CD14-positive monocyte (primary cell): ENCODE measurements at regions of chr22 and their contacts with region 1.

Region 1: GRCh38 chr22:28009272-28009827 is 90.3 kb upstream of the PITPNB start:
- DNase-seq: peak; percentile 30 to 61 (median 60)
- H3K4me3 ChIP-seq: no peak overlapping the region
- H3K4me3 Mint-ChIP-seq: no peak overlapping the region
- H3K27ac ChIP-seq: no peak overlapping the region
- H3K27ac Mint-ChIP-seq: no peak overlapping the region
- H3K4me1 ChIP-seq: no peaks in the 10 kb centered on the region
- H3K4me1 Mint-ChIP-seq: no peaks in the 10 kb centered on the region
- H3K27me3 ChIP-seq: no peaks in the 10 kb centered on the region
- H3K27me3 Mint-ChIP-seq: no peaks in the 10 kb centered on the region
- CTCF ChIP-seq: peak; percentile 96

Region 2: DNA sequence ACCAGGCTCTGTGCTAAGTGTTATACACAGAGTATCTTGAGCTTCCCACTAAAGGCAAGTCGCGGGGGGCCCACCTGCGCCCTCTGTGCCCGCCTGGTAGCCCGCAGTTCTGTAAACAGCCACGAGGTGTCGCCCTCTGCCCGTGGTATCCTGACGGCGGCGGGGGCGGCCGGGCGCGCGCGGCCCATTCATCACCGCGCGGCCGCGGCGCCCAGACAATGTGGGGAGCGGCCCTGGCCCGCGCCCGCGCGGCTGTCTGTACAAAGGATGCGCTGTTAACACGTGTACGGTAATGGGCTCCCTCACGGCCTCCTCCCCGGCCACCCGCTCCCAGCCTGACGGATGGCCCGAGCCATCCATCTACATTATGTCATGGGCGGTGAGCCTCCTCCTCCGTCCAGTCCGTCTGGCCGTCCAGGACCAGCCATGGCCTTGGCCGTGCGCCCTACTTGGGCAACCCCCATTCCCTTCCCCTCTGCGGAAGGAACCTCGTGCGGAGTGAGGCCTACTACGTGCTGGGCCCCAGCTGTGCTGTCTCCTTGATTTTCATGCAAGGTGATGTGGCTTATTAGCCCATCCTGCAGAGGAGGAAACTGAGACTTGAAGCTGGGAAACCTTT is 1252.6 kb before region 1 on chr22:
- intact Hi-C with region 1: loop called in 1 of 2 experiments (anchors 5 kb)
- DNase-seq: peak; percentile 1 to 37 (median 5)
- H3K4me3 ChIP-seq: no peak overlapping the region
- H3K4me3 Mint-ChIP-seq: no peak overlapping the region
- H3K27ac ChIP-seq: no peak overlapping the region
- H3K27ac Mint-ChIP-seq: no peak overlapping the region
- H3K4me1 ChIP-seq: peaks cover 0 to 6% of the 10 kb centered on the region in 2 donors
- H3K4me1 Mint-ChIP-seq: peaks cover 6% of the 10 kb centered on the region
- H3K27me3 ChIP-seq: no peaks in the 10 kb centered on the region
- H3K27me3 Mint-ChIP-seq: peaks cover 1 to 3% (median 3%) of the 10 kb centered on the region in 3 donors
- CTCF ChIP-seq: peak; percentile 95

Region 3: GRCh38 chr22:27885977-27886842 is 123.1 kb before region 1 on chr22:
- intact Hi-C with region 1: loop called (anchors 2 kb)
- DNase-seq: peak in 2 of 3 donors; percentile 27 to 46
- H3K4me3 ChIP-seq: no peak overlapping the region
- H3K4me3 Mint-ChIP-seq: no peak overlapping the region
- H3K27ac ChIP-seq: no peak overlapping the region
- H3K27ac Mint-ChIP-seq: peak overlapping the region in 1 of 7 donors; percentile 15
- H3K4me1 ChIP-seq: no peaks in the 10 kb centered on the region
- H3K4me1 Mint-ChIP-seq: no peaks in the 10 kb centered on the region
- H3K27me3 ChIP-seq: no peaks in the 10 kb centered on the region
- H3K27me3 Mint-ChIP-seq: no peaks in the 10 kb centered on the region
- CTCF ChIP-seq: peak; percentile 79

Region 4: DNA sequence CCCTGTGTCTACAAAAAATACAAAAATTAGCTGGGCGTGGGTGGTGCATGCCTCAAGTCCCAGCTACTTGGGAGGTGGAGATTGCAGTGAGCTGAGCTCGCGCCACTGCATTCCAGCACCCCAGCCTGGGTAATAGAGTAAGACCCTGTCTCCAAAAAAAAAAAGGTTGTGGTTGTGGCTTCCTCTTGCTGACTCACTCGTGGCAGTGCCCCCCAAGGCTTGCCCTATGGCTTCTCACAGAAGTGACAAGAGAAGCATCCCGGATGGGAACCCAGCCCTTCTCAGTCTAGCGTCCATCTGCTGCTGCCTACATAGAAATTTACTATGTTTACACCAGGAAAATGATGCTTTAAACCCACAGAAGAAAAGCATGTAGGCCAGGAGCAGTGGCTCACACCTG is 21.8 kb before region 1 on chr22:
- intact Hi-C with region 1: no loop called
- DNase-seq: no peak
- H3K4me3 ChIP-seq: no peak overlapping the region
- H3K4me3 Mint-ChIP-seq: no peak overlapping the region
- H3K27ac ChIP-seq: no peak overlapping the region
- H3K27ac Mint-ChIP-seq: no peak overlapping the region
- H3K4me1 ChIP-seq: no peaks in the 10 kb centered on the region
- H3K4me1 Mint-ChIP-seq: peaks cover 4% of the 10 kb centered on the region
- H3K27me3 ChIP-seq: no peaks in the 10 kb centered on the region
- H3K27me3 Mint-ChIP-seq: peaks cover 0 to under 1% (median 0%) of the 10 kb centered on the region in 3 donors
- CTCF ChIP-seq: no peak

Region 5: GRCh38 chr22:28043266-28043665 is 33.9 kb after region 1 on chr22:
- intact Hi-C with region 1: no loop called
- DNase-seq: no peak
- H3K4me3 ChIP-seq: no peak overlapping the region
- H3K4me3 Mint-ChIP-seq: no peak overlapping the region
- H3K27ac ChIP-seq: no peak overlapping the region
- H3K27ac Mint-ChIP-seq: no peak overlapping the region
- H3K4me1 ChIP-seq: no peaks in the 10 kb centered on the region
- H3K4me1 Mint-ChIP-seq: no peaks in the 10 kb centered on the region
- H3K27me3 ChIP-seq: no peaks in the 10 kb centered on the region
- H3K27me3 Mint-ChIP-seq: peaks cover 0 to 3% (median 0%) of the 10 kb centered on the region in 3 donors
- CTCF ChIP-seq: no peak